MCF 10A (cell line): ENCODE measurements at regions of chr1 and their contacts with region 1.

Region 1: DNA sequence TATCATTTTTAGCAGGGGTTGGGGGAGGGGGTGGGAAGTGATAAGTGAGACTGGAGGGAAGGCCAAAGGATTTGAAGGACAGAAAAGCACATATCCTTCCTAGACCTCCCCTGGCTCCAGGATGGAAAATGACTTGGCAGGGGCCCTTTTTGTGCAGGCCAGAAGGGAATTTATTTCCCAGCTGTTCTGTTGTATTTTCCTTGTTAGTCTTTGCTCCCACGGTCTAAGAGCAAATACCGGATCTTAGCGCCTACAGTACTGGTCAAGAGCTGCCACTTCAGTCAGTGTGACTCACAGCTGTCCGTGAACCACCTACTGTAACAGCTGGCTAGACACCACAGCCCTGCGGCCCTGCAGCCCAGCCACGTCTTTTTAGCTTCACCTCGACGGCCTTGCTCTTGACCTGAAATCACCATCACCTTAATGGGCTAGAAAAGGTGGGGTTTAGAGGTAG is 51.0 kb upstream of the ERRFI1 start:
- DNase-seq: peak; percentile 91
- H3K4me3 Mint-ChIP-seq: no peak overlapping the region
- H3K27ac Mint-ChIP-seq: peak overlapping the region; percentile 89
- H3K4me1 Mint-ChIP-seq: peaks cover 59% of the 10 kb centered on the region
- H3K27me3 Mint-ChIP-seq: no peaks in the 10 kb centered on the region
- CTCF ChIP-seq: no peak

Region 2: DNA sequence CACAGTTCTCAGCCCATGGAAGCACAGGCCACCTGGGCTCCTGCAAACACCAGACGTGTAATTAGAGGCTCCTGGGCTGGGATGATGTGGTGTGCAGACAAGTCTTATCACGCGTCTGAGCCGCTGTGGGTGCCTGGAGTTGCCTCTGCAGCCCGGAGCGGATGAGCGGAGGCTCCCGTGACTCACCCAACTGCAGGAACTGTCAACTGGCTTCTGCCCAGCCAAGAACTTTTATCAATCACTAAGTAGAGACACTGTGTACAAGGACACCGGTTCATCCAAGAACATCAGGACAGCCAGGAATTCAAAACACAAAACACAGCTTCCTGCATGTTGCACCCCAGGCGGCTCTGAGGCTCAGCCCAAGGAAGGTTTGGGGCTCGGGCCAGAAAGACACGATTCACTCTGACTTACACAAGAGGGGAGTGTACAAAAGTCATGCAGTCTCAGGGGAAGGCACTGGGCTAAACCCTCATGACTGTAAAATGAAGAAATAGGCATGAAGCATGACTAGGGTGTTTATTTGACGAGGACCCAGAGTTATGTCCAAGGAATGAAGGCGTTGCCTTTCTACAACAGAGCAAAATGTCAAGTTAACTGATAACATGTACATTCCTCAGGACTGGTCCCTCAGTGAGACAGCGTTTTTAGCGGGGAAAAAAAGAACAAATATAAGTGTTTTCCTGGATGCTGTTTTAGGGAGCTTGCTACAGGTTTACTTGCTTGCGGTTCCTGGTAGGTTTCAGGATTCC is 72.2 kb before region 1 on chr1:
- CTCF ChIA-PET with region 1: no interaction called
- POLR2A ChIA-PET with region 1: interaction called, 34 read pairs
- intact Hi-C with region 1: no loop called
- DNase-seq: peak; percentile 99
- H3K4me3 Mint-ChIP-seq: peak overlapping the region; percentile 57
- H3K27ac Mint-ChIP-seq: peak overlapping the region; percentile 84
- H3K4me1 Mint-ChIP-seq: peaks cover 38% of the 10 kb centered on the region
- H3K27me3 Mint-ChIP-seq: no peaks in the 10 kb centered on the region
- CTCF ChIP-seq: no peak

Region 3: DNA sequence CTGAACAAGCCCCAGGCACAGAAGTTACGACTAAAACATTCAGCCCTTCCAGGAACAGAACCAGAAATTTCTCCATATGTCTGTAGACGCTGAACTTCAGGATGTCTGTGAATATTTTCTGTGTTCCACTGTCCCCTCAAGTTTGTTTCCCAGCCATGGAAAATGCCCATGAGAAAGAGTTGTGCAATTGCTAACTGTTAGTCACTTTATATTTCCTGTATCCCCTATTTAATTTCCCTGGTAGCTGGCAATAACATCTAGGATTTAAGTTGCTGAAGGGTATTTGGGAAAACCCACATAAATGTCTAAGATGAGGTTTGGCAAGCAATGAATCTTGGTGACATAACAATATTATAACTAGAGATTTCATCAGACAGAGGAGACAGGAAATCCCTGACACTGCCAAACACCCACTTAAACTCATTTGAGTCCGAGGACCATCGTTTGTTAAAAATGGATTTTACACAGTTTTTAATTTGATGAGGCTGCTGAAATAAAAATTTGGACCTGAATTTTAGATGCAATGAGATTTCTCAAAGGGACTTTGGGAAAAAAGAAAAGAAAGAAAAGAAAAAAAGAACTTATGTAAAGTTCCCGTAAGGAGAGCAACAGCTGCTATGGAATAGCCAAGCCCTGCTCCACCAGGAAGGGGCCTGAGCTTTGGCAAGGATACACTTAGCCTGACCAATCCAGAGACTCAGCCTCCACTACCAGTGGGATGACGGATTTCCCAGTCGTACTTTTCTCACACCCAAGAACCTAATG is 29.3 kb before region 1 on chr1:
- CTCF ChIA-PET with region 1: no interaction called
- POLR2A ChIA-PET with region 1: interaction called, 14 read pairs
- intact Hi-C with region 1: no loop called
- DNase-seq: peak; percentile 96
- H3K4me3 Mint-ChIP-seq: no peak overlapping the region
- H3K27ac Mint-ChIP-seq: peak overlapping the region; percentile 92
- H3K4me1 Mint-ChIP-seq: peaks cover 16% of the 10 kb centered on the region
- H3K27me3 Mint-ChIP-seq: no peaks in the 10 kb centered on the region
- CTCF ChIP-seq: no peak

Region 4: GRCh38 chr1:8097077-8097799 is 20.1 kb after region 1 on chr1:
- CTCF ChIA-PET with region 1: no interaction called
- POLR2A ChIA-PET with region 1: interaction called, 114 read pairs
- intact Hi-C with region 1: no loop called
- DNase-seq: peak; percentile 85
- H3K4me3 Mint-ChIP-seq: peak overlapping the region; percentile 19
- H3K27ac Mint-ChIP-seq: peak overlapping the region; percentile 96
- H3K4me1 Mint-ChIP-seq: peaks cover 55% of the 10 kb centered on the region
- H3K27me3 Mint-ChIP-seq: no peaks in the 10 kb centered on the region
- CTCF ChIP-seq: no peak

Region 5: GRCh38 chr1:8154621-8155052 is 77.5 kb after region 1 on chr1:
- CTCF ChIA-PET with region 1: interaction called, 3 read pairs
- POLR2A ChIA-PET with region 1: interaction called, 12 read pairs
- intact Hi-C with region 1: no loop called
- DNase-seq: peak; percentile 91
- H3K4me3 Mint-ChIP-seq: peak overlapping the region; percentile 13
- H3K27ac Mint-ChIP-seq: peak overlapping the region; percentile 98
- H3K4me1 Mint-ChIP-seq: peaks cover 14% of the 10 kb centered on the region
- H3K27me3 Mint-ChIP-seq: no peaks in the 10 kb centered on the region
- CTCF ChIP-seq: no peak

Region 6: DNA sequence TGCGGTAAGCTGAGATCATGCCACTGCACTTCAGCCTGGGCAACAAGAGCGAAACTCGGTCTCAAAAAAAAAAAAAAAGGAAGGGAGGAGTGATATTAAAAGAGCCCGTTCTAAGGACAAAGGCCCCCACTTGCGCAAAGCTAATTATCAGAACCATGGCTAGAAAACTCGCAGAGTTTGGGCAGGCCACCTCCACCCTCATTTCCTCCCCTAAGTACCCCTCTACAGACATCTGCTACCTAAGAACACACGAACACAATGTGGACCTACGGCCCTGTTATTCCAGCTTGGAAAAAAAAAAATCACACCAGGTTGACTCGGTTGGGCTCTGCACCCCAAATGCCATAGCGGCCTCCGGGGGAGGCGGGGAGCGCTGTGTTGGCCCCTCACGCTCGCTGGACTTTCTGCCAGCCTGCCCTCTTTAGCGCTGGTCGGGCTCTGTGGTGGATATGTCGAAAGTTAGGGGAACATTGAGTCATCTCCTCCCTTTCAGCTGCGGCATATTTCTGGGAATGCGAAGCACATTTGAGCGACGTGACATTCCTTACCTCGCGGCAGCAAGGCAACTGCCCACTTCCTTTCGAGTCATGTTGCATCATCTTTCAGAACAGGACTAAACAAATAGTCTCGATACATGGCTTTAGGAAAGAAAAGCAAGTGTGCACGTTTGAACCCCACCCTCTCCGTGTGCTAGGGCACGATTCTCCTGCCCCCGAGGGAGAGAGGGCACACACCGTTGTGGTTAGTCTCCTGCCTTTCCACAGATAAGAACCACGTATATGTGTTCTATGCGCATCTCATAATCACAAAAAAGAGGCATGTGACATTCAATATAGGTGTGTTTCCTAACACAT is 134.7 kb after region 1 on chr1:
- CTCF ChIA-PET with region 1: no interaction called
- POLR2A ChIA-PET with region 1: interaction called, 11 read pairs
- intact Hi-C with region 1: no loop called
- DNase-seq: peak; percentile 99
- H3K4me3 Mint-ChIP-seq: peak overlapping the region; percentile 51
- H3K27ac Mint-ChIP-seq: peak overlapping the region; percentile 85
- H3K4me1 Mint-ChIP-seq: peaks cover 26% of the 10 kb centered on the region
- H3K27me3 Mint-ChIP-seq: no peaks in the 10 kb centered on the region
- CTCF ChIP-seq: no peak

Region 7: DNA sequence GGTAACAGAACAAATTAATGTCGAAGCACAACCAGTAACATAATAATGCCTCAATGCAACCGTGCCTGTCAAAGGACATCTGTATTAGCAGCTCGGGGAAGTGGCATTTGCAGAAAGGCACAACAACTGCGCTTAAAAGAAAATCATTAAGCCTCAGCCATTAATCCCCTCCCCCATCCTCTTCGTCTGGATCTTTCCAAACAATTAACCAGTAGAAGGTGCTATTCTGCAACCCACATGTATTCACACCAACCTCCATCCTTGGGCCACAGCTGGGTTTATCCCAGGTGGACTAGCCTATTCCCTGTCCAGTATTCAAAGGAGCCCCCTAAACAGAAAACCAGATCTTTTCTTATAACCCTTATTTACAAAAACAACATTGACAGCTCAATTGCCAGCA is 737.7 kb after region 1 on chr1:
- CTCF ChIA-PET with region 1: no interaction called
- POLR2A ChIA-PET with region 1: no interaction called
- intact Hi-C with region 1: no loop called
- DNase-seq: peak; percentile 49
- H3K4me3 Mint-ChIP-seq: peak overlapping the region; percentile 84
- H3K27ac Mint-ChIP-seq: peak overlapping the region; percentile 97
- H3K4me1 Mint-ChIP-seq: peaks cover 42% of the 10 kb centered on the region
- H3K27me3 Mint-ChIP-seq: no peaks in the 10 kb centered on the region
- CTCF ChIP-seq: peak; percentile 18